ENCODE measurements at regions of chr2 and their contacts with region 1.

Region 1: DNA sequence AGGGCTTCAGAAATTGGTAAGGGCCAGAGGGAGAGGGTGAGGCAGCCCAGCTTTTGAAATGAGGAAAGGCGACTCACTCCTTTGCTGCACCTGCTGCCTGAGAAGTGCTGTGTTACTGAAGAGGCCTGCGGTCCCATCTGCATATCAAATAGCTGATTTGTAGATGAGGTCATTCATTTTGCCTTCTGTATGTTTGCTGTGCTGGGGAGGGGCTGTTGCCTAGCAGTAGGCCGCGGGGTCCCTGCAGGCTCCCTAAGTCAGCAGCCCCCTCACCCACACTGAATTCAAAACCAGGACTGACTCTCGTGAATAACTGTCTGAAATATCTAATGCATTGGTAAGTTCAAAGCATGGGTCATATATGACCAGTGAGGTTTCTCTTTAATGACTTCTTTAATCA is 377.2 kb downstream of the SOX11 start:
- DNase-seq: no peak
- H3K4me3 ChIP-seq: no peak overlapping the region
- H3K27ac ChIP-seq: no peak overlapping the region
- H3K4me1 ChIP-seq: peaks cover 3 to 36% of the 10 kb centered on the region in 2 experiments; a peak in 3 of 4 replicates
- H3K27me3 ChIP-seq: no peaks in the 10 kb centered on the region
- CTCF ChIP-seq: no peak
- EP300 ChIP-seq: no peak
- RAD21 ChIP-seq: no peak

Region 2: GRCh38 chr2:6080932-6081753 is 11.8 kb after region 1 on chr2:
- CTCF ChIA-PET with region 1: interaction called, 10 read pairs
- POLR2A ChIA-PET with region 1: no interaction called
- DNase-seq: peak; percentile 54
- H3K4me3 ChIP-seq: peak overlapping the region in 1 of 2 experiments; percentile 23; a peak in 1 of 4 replicates
- H3K27ac ChIP-seq: peak overlapping the region in 1 of 2 experiments; percentile 88; a peak in 2 of 4 replicates
- H3K4me1 ChIP-seq: peaks cover 0 to 36% of the 10 kb centered on the region in 2 experiments; a peak in 2 of 4 replicates
- H3K27me3 ChIP-seq: no peaks in the 10 kb centered on the region
- CTCF ChIP-seq: no peak
- EP300 ChIP-seq: peak in 1 of 2 experiments; percentile 54; a peak in 1 of 4 replicates
- RAD21 ChIP-seq: peak; percentile 34